Astrocyte of the cerebellum (primary cell): ENCODE measurements at regions of chr7 and their contacts with region 1.

Region 1: GRCh38 chr7:46352004-46352954 is 431.2 kb upstream of the IGFBP3 start:
- DNase-seq: peak; percentile 60
- H3K4me3 ChIP-seq: no peak overlapping the region
- CTCF ChIP-seq: peak; percentile 74

Region 2: GRCh38 chr7:46454816-46455215 is 102.5 kb after region 1 on chr7:
- in situ Hi-C with region 1: no loop called
- DNase-seq: peak; percentile 37
- H3K4me3 ChIP-seq: no peak overlapping the region
- CTCF ChIP-seq: no peak

Region 3: GRCh38 chr7:47088329-47089067 is 736.2 kb after region 1 on chr7:
- in situ Hi-C with region 1: loop called (anchors 25 kb)
- DNase-seq: peak; percentile 50
- H3K4me3 ChIP-seq: no peak overlapping the region
- CTCF ChIP-seq: peak; percentile 69

Region 4: DNA sequence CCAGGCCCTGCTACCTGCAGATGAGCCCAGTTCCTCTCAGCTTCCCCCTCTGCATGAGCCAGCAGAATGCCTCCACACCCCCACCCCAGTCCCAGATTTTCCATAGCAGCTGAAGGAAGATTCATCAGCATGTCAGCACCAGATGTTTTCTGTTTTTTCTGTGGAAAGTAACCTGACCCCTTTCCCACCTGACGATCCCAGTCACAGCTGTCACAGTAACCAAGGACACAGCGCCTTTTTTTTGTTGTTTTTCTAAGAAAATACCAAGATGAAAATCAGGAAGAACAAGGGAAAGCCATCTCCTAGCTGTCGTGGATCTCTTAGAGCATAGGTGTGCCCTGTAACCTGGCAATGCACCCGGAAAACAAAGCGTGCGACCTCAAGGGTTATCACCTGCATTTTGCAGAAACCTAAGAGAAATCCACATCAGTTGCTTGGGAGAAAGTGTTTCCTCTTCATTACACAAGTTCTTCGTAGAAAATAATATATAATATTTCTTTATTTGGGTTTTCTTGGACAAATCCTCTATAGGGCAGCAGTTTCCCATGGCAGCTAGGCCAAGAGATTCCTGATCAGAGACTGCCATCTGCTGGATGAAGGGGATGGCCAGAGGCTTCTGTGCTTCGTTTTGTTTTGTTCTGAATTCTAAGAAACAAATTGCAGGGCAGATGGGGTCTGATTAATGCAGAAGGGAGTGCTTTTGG is 827.7 kb after region 1 on chr7:
- in situ Hi-C with region 1: loop called (anchors 10 kb)
- DNase-seq: peak; percentile 56
- H3K4me3 ChIP-seq: no peak overlapping the region
- CTCF ChIP-seq: peak; percentile 93